SK-N-SH (cell line): ENCODE measurements at regions of chr1 and their contacts with region 1.

Region 1: GRCh38 chr1:1858382-1859086 is 32.4 kb downstream of the GNB1 start:
- DNase-seq: peak; percentile 89
- H3K4me3 ChIP-seq: peak overlapping the region; percentile 17 to 39; a peak in 2 of 4 replicates
- H3K27ac ChIP-seq: peak overlapping the region; percentile 86 to 89
- H3K4me1 ChIP-seq: peaks cover 9 to 51% of the 10 kb centered on the region in 2 experiments; a peak in 3 of 4 replicates
- H3K27me3 ChIP-seq: no peaks in the 10 kb centered on the region
- CTCF ChIP-seq: peak; percentile 52
- EP300 ChIP-seq: peak in 1 of 2 experiments; percentile 79; a peak in 2 of 4 replicates
- RAD21 ChIP-seq: peak; percentile 52

Region 2: GRCh38 chr1:1841575-1841995 is 16.9 kb before region 1 on chr1:
- CTCF ChIA-PET with region 1: no interaction called
- POLR2A ChIA-PET with region 1: no interaction called
- DNase-seq: no peak
- H3K4me3 ChIP-seq: no peak overlapping the region
- H3K27ac ChIP-seq: no peak overlapping the region; a peak in 1 of 4 replicates
- H3K4me1 ChIP-seq: peaks cover 0 to 13% of the 10 kb centered on the region in 2 experiments; a peak in 1 of 4 replicates
- H3K27me3 ChIP-seq: no peaks in the 10 kb centered on the region
- CTCF ChIP-seq: no peak; the same call in 1 of the 2 replicates
- EP300 ChIP-seq: no peak
- RAD21 ChIP-seq: no peak

Region 3: DNA sequence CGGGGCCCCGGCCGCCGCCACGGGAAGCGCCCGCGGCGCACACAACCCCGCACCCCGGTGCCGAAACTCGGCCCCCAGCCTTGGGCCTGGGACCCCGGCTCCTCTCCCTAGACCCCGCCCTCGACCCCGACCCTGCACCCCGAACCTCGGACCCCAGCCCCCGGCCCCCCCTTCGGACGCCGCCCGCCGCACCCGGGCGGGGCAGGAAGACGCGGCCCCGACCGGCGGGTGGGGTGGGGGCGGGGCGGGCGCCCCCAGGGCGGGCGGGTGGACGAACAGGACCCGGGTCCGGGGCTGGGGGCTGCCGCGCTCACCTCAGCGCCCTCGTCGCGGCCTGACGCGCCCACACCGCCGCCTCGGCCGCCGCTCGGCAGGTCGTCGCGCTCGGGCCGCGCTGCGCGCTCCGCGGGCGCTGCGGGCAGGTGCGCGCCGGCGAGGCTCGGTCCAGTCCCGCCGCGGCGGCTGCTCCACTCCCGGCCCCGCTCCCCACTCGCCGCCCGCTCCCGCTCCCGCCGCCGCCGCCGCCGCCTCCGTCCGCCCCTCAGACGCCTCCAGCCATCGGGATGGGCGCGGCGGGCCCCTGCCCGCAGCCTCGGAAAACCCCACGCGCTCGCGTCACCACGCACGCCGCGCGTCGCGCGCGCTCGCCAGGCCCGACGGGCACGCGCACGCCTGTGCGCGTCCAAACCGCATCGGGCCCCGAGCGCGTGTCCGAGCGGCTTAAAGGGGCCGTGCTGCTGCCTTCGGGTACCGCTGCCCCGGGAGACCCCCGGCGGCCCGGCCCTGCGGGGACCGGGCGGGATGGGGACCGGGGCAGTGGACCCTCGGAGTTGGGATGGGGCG is 32.2 kb after region 1 on chr1 and contains the start of gene GNB1:
- CTCF ChIA-PET with region 1: interaction called, 10 read pairs
- POLR2A ChIA-PET with region 1: no interaction called
- DNase-seq: peak; percentile 98
- H3K4me3 ChIP-seq: peak within 1 kb of the TSS; percentile 83 to 86
- H3K27ac ChIP-seq: peak within 1 kb of the TSS; percentile 84 to 93
- H3K4me1 ChIP-seq: peaks cover 0 to 37% of the 10 kb centered on the region in 2 experiments; a peak in 3 of 4 replicates
- H3K27me3 ChIP-seq: no peaks in the 10 kb centered on the region
- CTCF ChIP-seq: no peak
- EP300 ChIP-seq: no peak
- RAD21 ChIP-seq: no peak
- polyA plus RNA-seq, gene GNB1: 355 and 364 TPM in 2 replicates

Region 4: DNA sequence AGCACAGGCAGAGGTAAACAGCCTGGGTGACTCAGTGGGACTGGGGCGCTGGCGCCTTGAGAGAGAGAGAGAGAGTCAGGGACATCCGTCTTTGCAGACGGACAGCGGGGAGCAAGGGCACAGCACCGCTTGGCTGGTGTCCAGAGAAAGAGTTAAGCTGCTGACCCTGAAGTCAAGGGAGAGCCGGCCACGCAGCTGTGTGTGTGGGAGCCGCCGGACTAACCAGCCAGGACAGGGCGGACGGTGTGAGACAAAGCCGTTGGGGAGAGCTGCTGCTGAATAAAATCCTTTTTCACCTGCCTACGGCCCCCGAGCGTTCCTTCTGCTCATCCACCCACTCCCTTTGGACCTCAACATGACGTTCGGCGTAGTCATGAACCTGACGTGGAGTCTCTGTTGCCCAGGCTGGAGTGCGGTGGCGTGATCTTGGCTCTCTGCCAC is 130.6 kb after region 1 on chr1:
- CTCF ChIA-PET with region 1: no interaction called
- POLR2A ChIA-PET with region 1: no interaction called
- DNase-seq: peak; percentile 38
- H3K4me3 ChIP-seq: no peak overlapping the region
- H3K27ac ChIP-seq: no peak overlapping the region
- H3K4me1 ChIP-seq: no peaks in the 10 kb centered on the region; a peak in 1 of 4 replicates
- H3K27me3 ChIP-seq: no peaks in the 10 kb centered on the region
- CTCF ChIP-seq: no peak
- EP300 ChIP-seq: no peak
- RAD21 ChIP-seq: no peak